Right cardiac atrium (tissue), 5 donors: ENCODE measurements at regions of chr1 and their contacts with region 1.

Region 1: DNA sequence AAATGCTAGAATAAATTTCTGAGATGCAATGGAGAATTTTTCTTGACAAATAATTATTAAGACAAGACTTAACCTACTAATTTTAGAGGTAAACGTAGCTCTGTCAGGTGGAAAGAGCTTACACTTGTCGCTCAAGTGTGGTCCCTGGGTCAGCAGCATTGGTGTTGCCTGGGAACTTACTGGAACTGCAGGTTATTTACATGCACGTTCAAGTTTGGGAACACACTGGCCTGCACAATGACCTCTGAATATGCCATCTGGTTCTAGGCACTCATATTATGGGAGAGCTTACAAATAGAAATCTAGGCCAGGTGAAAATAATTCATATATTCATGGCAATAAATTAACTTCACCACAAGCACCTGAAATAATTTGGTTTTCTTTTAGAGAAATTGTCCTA is 88.5 kb upstream of the BCL9 start:
- DNase-seq: no peak
- ATAC-seq: no peak
- H3K4me3 ChIP-seq: no peak overlapping the region
- H3K27ac ChIP-seq: no peak overlapping the region
- H3K4me1 ChIP-seq: no peaks in the 10 kb centered on the region
- H3K27me3 ChIP-seq: no peaks in the 10 kb centered on the region

Region 2: DNA sequence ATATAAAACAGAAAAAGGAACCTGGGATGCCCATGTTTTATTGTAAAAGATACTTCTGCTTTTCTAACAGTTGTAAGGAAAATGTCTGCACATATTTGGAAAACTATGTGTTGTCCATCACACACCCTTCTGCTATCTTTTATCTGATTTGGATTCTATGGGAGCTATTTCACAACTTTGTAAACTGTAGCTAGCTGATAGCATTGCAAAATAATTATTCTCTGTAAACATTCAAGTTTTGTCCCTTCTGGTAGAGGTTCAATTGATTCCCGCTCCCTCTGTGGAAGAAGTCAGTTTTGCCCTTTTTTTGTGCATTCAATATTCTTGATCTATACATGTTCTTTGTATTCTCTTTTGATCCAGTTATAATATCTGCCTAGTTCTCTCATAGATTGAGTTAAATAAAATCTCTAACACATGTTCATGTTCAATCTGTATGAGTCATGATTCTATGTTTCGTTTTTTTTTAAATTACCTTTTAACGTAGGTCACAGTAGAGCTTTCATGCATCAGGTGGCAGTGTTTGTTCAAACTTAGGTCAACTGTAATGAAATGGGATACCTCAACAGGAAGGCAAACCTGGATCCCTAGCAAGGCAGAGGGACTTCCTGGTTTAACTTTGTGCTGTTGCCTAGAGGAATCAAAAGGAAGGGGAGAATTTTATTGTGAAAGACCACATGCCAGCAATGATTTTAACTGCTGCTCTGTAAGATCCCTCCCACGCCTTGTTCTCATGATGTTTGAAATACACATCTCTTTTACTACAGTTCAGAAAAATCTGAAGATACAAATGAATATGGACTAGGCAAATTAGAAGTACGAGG is 62.4 kb after region 1 on chr1:
- intact Hi-C with region 1: loop called in 1 of 4 experiments (anchors 10 kb)
- DNase-seq: no peak
- ATAC-seq: peak; percentile 58 to 65
- H3K4me3 ChIP-seq: no peak overlapping the region
- H3K27ac ChIP-seq: no peak overlapping the region
- H3K4me1 ChIP-seq: peaks cover 3% of the 10 kb centered on the region
- H3K27me3 ChIP-seq: no peaks in the 10 kb centered on the region